ENCODE measurements at regions of chr5 and their contacts with region 1.

Region 1: GRCh38 chr5:149442563-149443182 is 63.6 kb upstream of the IL17B start:
- DNase-seq: peak; percentile 87
- CTCF ChIP-seq: peak; percentile 96

Region 2: GRCh38 chr5:149153751-149154610 is 288.7 kb before region 1 on chr5:
- CTCF ChIA-PET with region 1: no interaction called
- POLR2A ChIA-PET with region 1: no interaction called
- DNase-seq: no peak
- CTCF ChIP-seq: no peak

Region 3: GRCh38 chr5:149452665-149453617 is 10.3 kb after region 1 on chr5:
- CTCF ChIA-PET with region 1: interaction called, 24 read pairs
- POLR2A ChIA-PET with region 1: no interaction called
- DNase-seq: no peak
- CTCF ChIP-seq: no peak

Region 4: DNA sequence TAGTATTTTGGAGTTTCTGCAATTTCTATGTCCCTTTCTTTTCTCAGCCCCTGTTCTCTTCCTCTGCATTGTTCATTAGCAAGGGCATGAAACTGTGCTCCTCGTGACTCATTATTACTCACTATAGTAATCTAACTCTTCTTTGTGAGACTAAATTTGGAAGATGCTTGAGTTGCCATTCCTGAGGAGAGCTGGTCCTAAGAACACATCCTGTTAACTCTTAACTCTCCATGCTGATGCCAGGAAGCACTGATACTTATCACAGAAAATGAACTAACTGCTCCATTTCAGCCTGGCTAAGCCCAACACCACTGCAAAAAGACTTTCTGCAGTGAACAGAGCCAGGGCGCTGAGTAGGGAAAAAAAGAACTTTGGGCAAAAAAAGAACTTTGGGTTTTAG is 119.2 kb after region 1 on chr5:
- CTCF ChIA-PET with region 1: interaction called, 110 read pairs
- POLR2A ChIA-PET with region 1: no interaction called
- DNase-seq: no peak
- CTCF ChIP-seq: no peak

Region 5: GRCh38 chr5:149567226-149567625 is 124.6 kb after region 1 on chr5:
- CTCF ChIA-PET with region 1: interaction called, 110 read pairs
- POLR2A ChIA-PET with region 1: no interaction called
- DNase-seq: no peak
- CTCF ChIP-seq: no peak

Region 6: DNA sequence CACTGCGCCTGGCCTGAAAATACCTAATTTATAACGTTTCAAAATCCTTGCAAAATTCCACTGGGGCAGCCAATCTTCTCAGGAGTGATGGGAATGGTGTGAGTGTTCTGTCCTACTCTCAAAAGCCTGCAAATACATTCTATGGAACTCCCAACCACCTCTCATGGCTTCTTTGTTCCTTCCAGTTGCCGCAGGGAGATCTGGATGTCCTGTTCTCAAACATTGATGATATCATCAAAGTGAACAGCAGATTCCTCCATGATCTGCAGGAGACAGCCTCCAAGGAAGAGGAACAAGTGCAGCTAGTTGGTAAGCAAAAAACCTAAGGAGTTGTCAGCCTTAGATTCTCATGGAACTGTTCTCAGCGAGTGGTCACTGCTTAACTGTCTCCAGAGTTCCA is 158.2 kb after region 1 on chr5:
- CTCF ChIA-PET with region 1: no interaction called
- POLR2A ChIA-PET with region 1: no interaction called
- DNase-seq: no peak
- CTCF ChIP-seq: no peak

Region 7: GRCh38 chr5:149852641-149853330 is 410.1 kb after region 1 on chr5:
- CTCF ChIA-PET with region 1: no interaction called
- POLR2A ChIA-PET with region 1: no interaction called
- DNase-seq: peak; percentile 71
- CTCF ChIP-seq: peak; percentile 87